ENCODE measurements at regions of chr3 and their contacts with region 1.

Region 1: GRCh38 chr3:108914774-108915641 is 38.7 kb downstream of the GUCA1C start:
- DNase-seq: peak; percentile 69
- ATAC-seq: peak; percentile 91
- H3K4me3 ChIP-seq: no peak overlapping the region
- H3K27ac ChIP-seq: no peak overlapping the region
- H3K4me1 ChIP-seq: peaks cover 4 to 23% of the 10 kb centered on the region in 2 experiments; a peak in 3 of 4 replicates
- H3K27me3 ChIP-seq: no peaks in the 10 kb centered on the region
- CTCF ChIP-seq: peak; percentile 56 to 93 (median 86); a peak in 5 of 6 replicates
- POLR2A ChIP-seq: no peak
- RAD21 ChIP-seq: peak; percentile 89

Region 2: GRCh38 chr3:108518895-108519294 is 396.1 kb before region 1 on chr3:
- CTCF ChIA-PET with region 1: no interaction called
- POLR2A ChIA-PET with region 1: no interaction called
- RAD21 ChIA-PET with region 1: no interaction called
- intact Hi-C with region 1: no loop called
- DNase-seq: no peak
- ATAC-seq: no peak
- H3K4me3 ChIP-seq: no peak overlapping the region
- H3K27ac ChIP-seq: no peak overlapping the region
- H3K4me1 ChIP-seq: no peaks in the 10 kb centered on the region
- H3K27me3 ChIP-seq: no peaks in the 10 kb centered on the region
- CTCF ChIP-seq: no peak
- POLR2A ChIP-seq: no peak
- RAD21 ChIP-seq: no peak

Region 3: DNA sequence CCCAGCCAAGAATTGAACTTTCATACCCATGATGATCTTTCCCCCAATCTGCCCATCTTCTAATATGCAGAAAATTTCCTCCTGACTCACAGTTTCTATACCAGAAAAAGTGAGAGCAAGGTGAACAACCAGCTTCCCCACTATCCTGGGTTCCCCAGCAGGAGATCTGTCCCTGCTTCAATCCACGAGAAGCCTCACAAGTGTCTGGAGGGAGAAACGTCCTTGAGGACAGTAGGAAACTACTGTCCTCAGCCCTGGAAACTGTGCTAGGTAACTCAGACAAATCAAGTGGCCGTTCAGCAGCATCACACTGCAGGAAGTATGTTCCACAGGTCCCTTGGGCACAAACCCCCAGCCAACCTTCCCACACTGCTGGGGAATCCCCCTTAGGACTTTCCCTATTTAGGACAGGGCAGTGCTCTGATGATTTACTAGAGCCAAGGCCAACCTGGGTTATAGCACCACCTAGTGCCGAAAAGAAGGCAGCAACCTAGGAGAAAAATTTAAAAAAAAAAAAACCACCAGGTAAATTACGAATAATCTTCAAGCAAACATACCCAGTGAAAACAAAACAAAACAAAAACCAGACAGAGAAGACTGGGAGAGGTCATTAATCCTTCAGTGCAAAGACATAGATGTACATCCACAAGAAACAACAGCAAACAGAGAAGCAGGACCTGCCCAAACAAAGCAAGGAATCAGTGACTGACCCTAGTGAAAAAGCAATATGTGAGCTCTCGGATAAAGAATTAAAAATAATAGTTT is 166.9 kb after region 1 on chr3:
- CTCF ChIA-PET with region 1: interaction called, 4 read pairs
- POLR2A ChIA-PET with region 1: no interaction called
- RAD21 ChIA-PET with region 1: no interaction called
- intact Hi-C with region 1: loop called (anchors 5 kb)
- DNase-seq: peak; percentile 48
- ATAC-seq: peak; percentile 91
- H3K4me3 ChIP-seq: no peak overlapping the region
- H3K27ac ChIP-seq: no peak overlapping the region
- H3K4me1 ChIP-seq: no peaks in the 10 kb centered on the region; a peak in 1 of 4 replicates
- H3K27me3 ChIP-seq: no peaks in the 10 kb centered on the region
- CTCF ChIP-seq: peak; percentile 59 to 90 (median 77); a peak in 5 of 6 replicates
- POLR2A ChIP-seq: no peak
- RAD21 ChIP-seq: peak; percentile 74

Measured in HCT116 (cell line).